BJ (cell line): ENCODE measurements at regions of chr5 and their contacts with region 1.

Region 1: DNA sequence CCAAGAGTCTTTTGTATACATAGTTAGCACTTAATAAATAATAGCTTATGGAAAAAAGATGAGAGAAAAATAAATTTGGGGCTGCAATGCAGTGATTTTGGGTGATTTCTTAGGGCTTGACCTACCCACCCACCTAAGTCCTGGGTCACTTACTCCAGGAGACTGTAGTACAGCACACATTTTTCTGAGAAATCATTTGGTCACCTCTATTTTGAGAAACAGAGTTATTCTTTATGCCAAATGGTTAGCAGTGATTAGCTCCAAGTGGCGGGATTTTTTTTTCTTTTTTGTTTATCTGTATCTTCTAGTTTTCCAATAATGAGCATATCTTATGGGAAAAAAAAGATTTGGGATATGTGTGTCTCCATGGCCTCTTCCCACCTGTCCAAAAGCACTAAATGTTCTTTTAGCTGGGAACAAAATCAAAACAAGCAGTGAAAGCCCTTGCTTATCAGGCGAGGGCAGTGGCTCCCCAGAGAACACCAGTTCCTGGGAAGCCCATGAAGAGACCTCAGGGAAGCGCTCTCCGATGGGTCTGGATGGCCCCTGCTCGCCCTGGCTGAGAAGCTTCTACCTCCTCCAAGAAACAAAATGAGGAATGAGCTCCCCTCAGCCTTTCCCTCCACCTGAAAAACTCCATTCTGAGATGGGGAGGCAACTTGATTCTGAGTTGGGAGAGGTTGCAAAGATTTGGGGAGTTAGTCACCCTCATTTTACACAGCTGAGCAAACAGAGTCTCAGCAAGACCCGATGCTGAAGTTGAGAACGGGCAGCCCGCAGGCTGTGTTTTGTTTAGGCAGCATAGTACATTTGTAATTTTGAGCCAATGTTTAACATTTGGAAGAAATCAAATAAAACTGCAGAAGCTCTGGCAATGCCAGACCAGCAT is 69.9 kb downstream of the CYFIP2 start:
- DNase-seq: peak; percentile 75
- H3K4me3 ChIP-seq: no peak overlapping the region
- H3K27me3 ChIP-seq: no peaks in the 10 kb centered on the region
- CTCF ChIP-seq: no peak

Region 2: DNA sequence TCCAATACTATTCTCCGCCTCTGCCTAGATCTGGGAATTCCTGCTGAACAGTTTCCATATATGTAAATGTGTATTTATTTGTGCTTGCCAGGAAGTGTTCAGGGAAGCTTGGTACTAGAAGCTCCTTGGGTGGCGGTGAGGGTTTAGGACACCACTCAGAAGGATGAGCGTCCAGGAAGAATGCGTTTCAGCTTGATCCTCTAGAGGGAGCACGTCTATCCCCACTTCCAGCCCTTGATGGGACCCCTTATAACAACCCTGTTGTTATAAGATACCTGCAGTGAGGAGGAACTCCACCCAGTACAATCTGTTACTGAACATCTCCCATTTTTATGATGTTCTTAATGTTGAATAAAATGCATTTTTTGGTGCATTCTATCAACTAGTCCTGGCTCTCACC is 19.0 kb after region 1 on chr5:
- CTCF ChIA-PET with region 1: interaction called, 18 read pairs
- POLR2A ChIA-PET with region 1: no interaction called
- DNase-seq: no peak
- H3K4me3 ChIP-seq: no peak overlapping the region
- H3K27me3 ChIP-seq: no peaks in the 10 kb centered on the region
- CTCF ChIP-seq: peak; percentile 45

Region 3: GRCh38 chr5:157471709-157472108 is 135.9 kb after region 1 on chr5:
- CTCF ChIA-PET with region 1: interaction called, 7 read pairs
- POLR2A ChIA-PET with region 1: interaction called, 20 read pairs
- DNase-seq: no peak
- H3K4me3 ChIP-seq: no peak overlapping the region
- H3K27me3 ChIP-seq: no peaks in the 10 kb centered on the region
- CTCF ChIP-seq: peak; percentile 62